IMR-90 (cell line): ENCODE measurements at regions of chrX and their contacts with region 1.

Region 1: GRCh38 chrX:11100281-11101035 is 10.7 kb upstream of the HCCS start:
- DNase-seq: peak; percentile 80
- ATAC-seq: peak; percentile 80
- H3K4me3 ChIP-seq: no peak overlapping the region
- H3K27ac ChIP-seq: peak overlapping the region; percentile 69; the same call in 1 of the 2 replicates
- H3K4me1 ChIP-seq: 0 out of 2 replicates have a peak, but pooled peaks cover 2% of the 10 kb centered on the region
- H3K27me3 ChIP-seq: no peaks in the 10 kb centered on the region
- CTCF ChIP-seq: peak; percentile 66
- POLR2A ChIP-seq: no peak
- RAD21 ChIP-seq: peak; percentile 81

Region 2: DNA sequence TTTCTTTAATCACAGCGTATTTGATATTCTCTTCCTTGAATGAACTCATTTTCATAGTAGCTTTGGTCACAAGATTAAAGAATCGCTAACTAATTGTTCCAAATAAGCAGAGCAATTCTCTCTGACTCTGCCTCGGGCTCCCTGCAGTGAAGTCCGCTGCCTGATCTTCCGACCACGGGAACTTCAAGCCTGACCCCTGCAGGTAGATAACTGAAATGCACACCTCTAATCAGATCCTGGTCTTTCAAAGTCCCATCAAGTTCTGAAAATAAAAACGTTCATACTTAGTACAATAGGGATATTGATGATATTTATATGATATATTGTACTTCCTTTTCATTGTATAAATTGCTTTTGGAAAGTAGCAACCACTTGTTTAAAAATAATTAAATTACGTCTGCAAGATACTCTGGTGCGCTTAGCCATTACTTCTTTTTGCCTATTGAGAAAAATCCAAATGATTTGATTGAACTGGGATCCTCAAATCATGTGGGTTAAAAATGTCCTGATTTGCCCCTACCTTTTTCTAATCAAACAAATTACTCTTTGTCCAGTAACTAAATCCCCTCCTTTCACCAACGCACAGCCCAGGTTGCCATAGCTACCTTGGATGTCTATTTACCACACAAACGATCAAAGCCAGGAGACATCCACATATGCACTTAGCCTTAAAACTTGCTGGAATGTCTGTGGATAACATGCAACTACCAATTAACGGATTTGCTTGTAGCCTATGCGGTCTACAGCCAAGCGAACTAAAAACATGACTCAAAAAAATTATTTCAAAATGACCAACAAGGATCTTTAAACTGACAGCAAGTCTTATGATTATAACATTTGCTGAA is 484.3 kb before region 1 on chrX:
- CTCF ChIA-PET with region 1: no interaction called
- POLR2A ChIA-PET with region 1: no interaction called
- dilution Hi-C with region 1: no loop called
- in situ Hi-C with region 1: no loop called
- intact Hi-C with region 1: loop called (anchors 5 kb)
- DNase-seq: peak; percentile 58
- ATAC-seq: no peak
- H3K4me3 ChIP-seq: no peak overlapping the region
- H3K27ac ChIP-seq: peak overlapping the region; percentile 22; the same call in 1 of the 2 replicates
- H3K4me1 ChIP-seq: peaks cover 7% of the 10 kb centered on the region
- H3K27me3 ChIP-seq: no peaks in the 10 kb centered on the region
- CTCF ChIP-seq: peak; percentile 58
- POLR2A ChIP-seq: no peak
- RAD21 ChIP-seq: peak; percentile 64

Region 3: DNA sequence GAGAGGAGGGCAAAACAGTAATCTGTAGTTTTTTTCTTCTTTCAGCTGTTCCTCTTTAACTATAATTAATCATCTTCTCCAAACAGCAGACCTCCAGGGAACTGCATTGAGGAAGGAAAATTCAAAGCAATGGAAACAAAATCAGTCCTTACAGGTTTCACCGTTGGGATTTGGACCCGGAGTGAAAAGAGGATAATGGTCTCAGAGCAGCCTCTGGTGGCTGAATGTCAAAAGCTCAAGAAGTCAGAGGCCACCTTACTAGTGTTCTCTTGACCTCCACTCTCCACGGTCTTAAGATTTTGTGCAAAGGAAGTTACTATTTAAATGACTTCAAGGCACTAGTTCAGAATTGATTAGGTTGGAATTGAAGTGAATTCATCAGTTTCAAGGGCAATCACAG is 464.1 kb before region 1 on chrX:
- CTCF ChIA-PET with region 1: no interaction called
- POLR2A ChIA-PET with region 1: no interaction called
- dilution Hi-C with region 1: no loop called
- in situ Hi-C with region 1: no loop called
- intact Hi-C with region 1: loop called (anchors 2 kb)
- DNase-seq: peak; percentile 68
- ATAC-seq: peak; percentile 62
- H3K4me3 ChIP-seq: no peak overlapping the region
- H3K27ac ChIP-seq: no peak overlapping the region
- H3K4me1 ChIP-seq: peaks cover 2% of the 10 kb centered on the region; the same call in 1 of the 2 replicates
- H3K27me3 ChIP-seq: no peaks in the 10 kb centered on the region
- CTCF ChIP-seq: peak; percentile 70
- POLR2A ChIP-seq: no peak
- RAD21 ChIP-seq: peak; percentile 83

Region 4: GRCh38 chrX:10722851-10723250 is 377.6 kb before region 1 on chrX:
- CTCF ChIA-PET with region 1: no interaction called
- POLR2A ChIA-PET with region 1: interaction called, 5 read pairs
- dilution Hi-C with region 1: no loop called
- in situ Hi-C with region 1: no loop called
- intact Hi-C with region 1: loop called (anchors 1 kb)
- DNase-seq: peak; percentile 67
- ATAC-seq: peak; percentile 90
- H3K4me3 ChIP-seq: no peak overlapping the region
- H3K27ac ChIP-seq: no peak overlapping the region
- H3K4me1 ChIP-seq: 0 out of 2 replicates have a peak, but pooled peaks cover 1% of the 10 kb centered on the region
- H3K27me3 ChIP-seq: no peaks in the 10 kb centered on the region
- CTCF ChIP-seq: peak; percentile 78
- POLR2A ChIP-seq: no peak
- RAD21 ChIP-seq: peak; percentile 76

Region 5: GRCh38 chrX:10755439-10756334 is 344.8 kb before region 1 on chrX:
- CTCF ChIA-PET with region 1: no interaction called
- POLR2A ChIA-PET with region 1: no interaction called
- dilution Hi-C with region 1: no loop called
- in situ Hi-C with region 1: no loop called
- intact Hi-C with region 1: loop called (anchors 1 kb)
- DNase-seq: peak; percentile 81
- ATAC-seq: peak; percentile 79
- H3K4me3 ChIP-seq: peak overlapping the region; percentile 14; the same call in 1 of the 2 replicates
- H3K27ac ChIP-seq: peak overlapping the region; percentile 81; the same call in 1 of the 2 replicates
- H3K4me1 ChIP-seq: 0 out of 2 replicates have a peak, but pooled peaks cover 2% of the 10 kb centered on the region
- H3K27me3 ChIP-seq: no peaks in the 10 kb centered on the region
- CTCF ChIP-seq: no peak
- POLR2A ChIP-seq: no peak
- RAD21 ChIP-seq: no peak

Region 6: GRCh38 chrX:10769195-10769594 is 331.3 kb before region 1 on chrX:
- CTCF ChIA-PET with region 1: interaction called, 3 read pairs
- POLR2A ChIA-PET with region 1: no interaction called
- dilution Hi-C with region 1: no loop called
- in situ Hi-C with region 1: no loop called
- intact Hi-C with region 1: loop called (anchors 1 kb)
- DNase-seq: peak; percentile 35
- ATAC-seq: peak; percentile 79; the same call in 1 of the 2 replicates
- H3K4me3 ChIP-seq: no peak overlapping the region
- H3K27ac ChIP-seq: peak overlapping the region; percentile 82; the same call in 1 of the 2 replicates
- H3K4me1 ChIP-seq: peaks cover 3% of the 10 kb centered on the region; the same call in 1 of the 2 replicates
- H3K27me3 ChIP-seq: no peaks in the 10 kb centered on the region
- CTCF ChIP-seq: peak; percentile 52
- POLR2A ChIP-seq: no peak
- RAD21 ChIP-seq: peak; percentile 35

Region 7: GRCh38 chrX:10854594-10854993 is 245.9 kb before region 1 on chrX:
- CTCF ChIA-PET with region 1: no interaction called
- POLR2A ChIA-PET with region 1: no interaction called
- dilution Hi-C with region 1: no loop called
- in situ Hi-C with region 1: no loop called
- intact Hi-C with region 1: loop called (anchors 1 kb)
- DNase-seq: no peak
- ATAC-seq: no peak
- H3K4me3 ChIP-seq: no peak overlapping the region
- H3K27ac ChIP-seq: no peak overlapping the region
- H3K4me1 ChIP-seq: no peaks in the 10 kb centered on the region
- H3K27me3 ChIP-seq: no peaks in the 10 kb centered on the region
- CTCF ChIP-seq: no peak
- POLR2A ChIP-seq: no peak
- RAD21 ChIP-seq: no peak

Region 8: DNA sequence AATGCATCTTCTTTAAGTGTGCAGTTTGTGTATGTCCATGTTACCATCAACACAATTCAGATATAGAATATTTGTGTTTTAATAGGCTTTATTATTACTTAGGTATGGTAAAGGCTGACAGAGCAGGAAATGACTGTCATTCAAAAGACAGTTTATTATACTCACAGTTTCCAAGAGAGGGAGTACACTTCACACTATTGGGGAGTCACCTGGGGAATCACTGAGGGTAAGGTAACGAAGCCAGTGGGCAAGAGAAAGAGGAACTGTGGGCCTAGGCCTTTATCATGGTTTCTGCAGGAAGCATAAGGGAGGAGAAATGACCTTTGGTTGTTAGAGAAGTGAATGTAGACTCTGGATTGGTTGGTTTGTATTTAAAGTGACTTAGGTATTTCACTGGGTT is 224.5 kb before region 1 on chrX:
- CTCF ChIA-PET with region 1: no interaction called
- POLR2A ChIA-PET with region 1: no interaction called
- dilution Hi-C with region 1: no loop called
- in situ Hi-C with region 1: no loop called
- intact Hi-C with region 1: no loop called
- DNase-seq: no peak
- ATAC-seq: no peak
- H3K4me3 ChIP-seq: no peak overlapping the region
- H3K27ac ChIP-seq: no peak overlapping the region
- H3K4me1 ChIP-seq: no peaks in the 10 kb centered on the region
- H3K27me3 ChIP-seq: no peaks in the 10 kb centered on the region
- CTCF ChIP-seq: no peak
- POLR2A ChIP-seq: no peak
- RAD21 ChIP-seq: no peak